ENCODE measurements at regions of chr4 and their contacts with region 1.

Region 1: DNA sequence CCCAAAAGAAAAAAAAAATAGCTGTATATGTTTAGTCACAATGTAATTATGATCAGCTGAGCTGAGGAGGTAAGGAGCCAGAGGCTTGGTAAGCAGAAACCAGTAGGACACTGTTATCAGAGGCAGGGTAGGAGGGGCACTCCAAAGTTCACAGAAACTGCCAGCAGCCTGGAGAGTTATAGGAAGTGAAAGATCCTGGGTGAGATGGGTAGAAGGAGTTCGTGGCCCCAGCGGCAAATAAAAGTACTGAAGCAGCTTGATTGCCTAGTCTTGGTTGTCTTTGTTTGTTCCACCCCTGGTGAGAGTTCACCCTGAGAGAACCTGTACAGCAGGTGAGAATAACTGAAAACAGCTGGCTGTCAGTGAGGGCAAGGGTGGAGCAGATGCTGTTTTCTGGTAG is 340.8 kb downstream of the ADGRL3 start:
- DNase-seq: no peak
- ATAC-seq: no peak
- H3K4me3 ChIP-seq: no peak overlapping the region
- H3K27ac ChIP-seq: no peak overlapping the region
- H3K4me1 ChIP-seq: no peaks in the 10 kb centered on the region
- H3K27me3 ChIP-seq: no peaks in the 10 kb centered on the region
- CTCF ChIP-seq: no peak

Region 2: GRCh38 chr4:61723492-61723891 is 182.5 kb after region 1 on chr4:
- CTCF ChIA-PET with region 1: no interaction called
- POLR2A ChIA-PET with region 1: no interaction called
- intact Hi-C with region 1: loop called (anchors 10 kb)
- DNase-seq: no peak
- ATAC-seq: no peak
- H3K4me3 ChIP-seq: no peak overlapping the region
- H3K27ac ChIP-seq: no peak overlapping the region
- H3K4me1 ChIP-seq: no peaks in the 10 kb centered on the region
- H3K27me3 ChIP-seq: no peaks in the 10 kb centered on the region
- CTCF ChIP-seq: no peak

Region 3: GRCh38 chr4:61741327-61742096 is 200.6 kb after region 1 on chr4:
- CTCF ChIA-PET with region 1: interaction called, 13 read pairs
- POLR2A ChIA-PET with region 1: no interaction called
- intact Hi-C with region 1: no loop called
- DNase-seq: peak; percentile 75
- ATAC-seq: peak; percentile 81
- H3K4me3 ChIP-seq: no peak overlapping the region
- H3K27ac ChIP-seq: no peak overlapping the region
- H3K4me1 ChIP-seq: no peaks in the 10 kb centered on the region
- H3K27me3 ChIP-seq: no peaks in the 10 kb centered on the region
- CTCF ChIP-seq: peak; percentile 93

Measured in PC-3 (cell line).